ENCODE measurements at regions of chr6 and their contacts with region 1.

Region 1: GRCh38 chr6:31546962-31547726 is at the start of gene NFKBIL1:
- DNase-seq: peak; percentile 88 to 94
- H3K4me3 ChIP-seq: peak within 1 kb of the TSS; percentile 37 to 70 (median 51); a peak in 7 of 8 replicates
- H3K27ac ChIP-seq: peak within 1 kb of the TSS; percentile 21; the same call in 1 of the 2 replicates
- H3K4me1 ChIP-seq: peaks cover 0 to 8% (median 5%) of the 10 kb centered on the region in 4 experiments; a peak in 5 of 7 replicates
- H3K27me3 ChIP-seq: no peaks in the 10 kb centered on the region
- CTCF ChIP-seq: no peak
- EP300 ChIP-seq: peak in 1 of 2 experiments; percentile 61; a peak in 1 of 3 replicates
- POLR2A ChIP-seq: peak; percentile 22 to 74
- RAD21 ChIP-seq: peak in 1 of 2 experiments; percentile 7; a peak in 1 of 4 replicates
- total RNA-seq, gene NFKBIL1: 10.8 and 11.2 TPM in 2 replicates

Region 2: DNA sequence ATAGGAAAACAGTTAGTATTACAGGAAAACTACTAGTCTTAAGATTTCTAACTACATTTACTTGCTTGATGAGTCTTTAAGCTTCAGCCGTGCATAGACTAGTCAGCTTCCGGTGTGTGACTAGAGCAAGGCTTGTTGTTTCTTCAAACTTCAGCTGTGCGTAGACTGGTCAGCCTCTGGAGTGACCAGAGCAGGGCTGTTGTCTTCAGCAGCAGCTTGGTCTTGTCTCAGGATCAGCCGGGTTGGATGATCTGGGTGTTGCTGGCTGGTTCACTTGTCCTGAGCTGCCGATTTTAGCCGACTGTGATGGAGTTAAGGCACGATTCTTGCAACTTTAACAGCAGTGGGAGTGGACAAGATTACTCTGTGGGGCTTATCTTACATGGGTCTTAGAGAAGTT is 320.0 kb before region 1 on chr6:
- CTCF ChIA-PET with region 1: no interaction called
- POLR2A ChIA-PET with region 1: no interaction called
- DNase-seq: no peak
- H3K4me3 ChIP-seq: no peak overlapping the region
- H3K27ac ChIP-seq: no peak overlapping the region
- H3K4me1 ChIP-seq: no peaks in the 10 kb centered on the region
- H3K27me3 ChIP-seq: no peaks in the 10 kb centered on the region
- CTCF ChIP-seq: no peak
- EP300 ChIP-seq: no peak
- POLR2A ChIP-seq: no peak
- RAD21 ChIP-seq: no peak

Region 3: DNA sequence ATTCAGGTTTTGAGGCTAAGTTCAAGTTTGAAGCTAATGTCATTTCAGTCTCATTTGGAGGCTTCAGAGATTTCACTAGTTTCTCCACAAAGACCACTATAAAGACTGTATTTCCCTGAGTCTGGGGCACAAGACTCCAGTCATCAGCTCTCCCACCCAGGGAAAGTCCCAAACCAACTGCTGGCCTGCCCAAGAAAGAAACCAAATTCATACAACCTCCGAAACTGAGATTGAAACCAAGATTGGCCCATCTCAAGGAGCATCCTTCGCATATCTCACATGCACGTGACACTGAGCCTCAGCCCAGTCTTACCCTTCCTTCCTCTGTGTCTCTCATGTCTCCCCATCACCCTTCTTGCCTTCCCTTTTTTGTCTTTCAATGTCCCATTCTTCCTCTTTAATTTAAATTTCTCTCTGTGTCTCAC is 21.4 kb after region 1 on chr6:
- CTCF ChIA-PET with region 1: interaction called, 29 read pairs
- POLR2A ChIA-PET with region 1: interaction called, 9 read pairs
- DNase-seq: no peak
- H3K4me3 ChIP-seq: no peak overlapping the region
- H3K27ac ChIP-seq: no peak overlapping the region
- H3K4me1 ChIP-seq: no peaks in the 10 kb centered on the region; a peak in 2 of 7 replicates
- H3K27me3 ChIP-seq: no peaks in the 10 kb centered on the region
- CTCF ChIP-seq: no peak
- EP300 ChIP-seq: no peak
- POLR2A ChIP-seq: no peak
- RAD21 ChIP-seq: no peak

Region 4: DNA sequence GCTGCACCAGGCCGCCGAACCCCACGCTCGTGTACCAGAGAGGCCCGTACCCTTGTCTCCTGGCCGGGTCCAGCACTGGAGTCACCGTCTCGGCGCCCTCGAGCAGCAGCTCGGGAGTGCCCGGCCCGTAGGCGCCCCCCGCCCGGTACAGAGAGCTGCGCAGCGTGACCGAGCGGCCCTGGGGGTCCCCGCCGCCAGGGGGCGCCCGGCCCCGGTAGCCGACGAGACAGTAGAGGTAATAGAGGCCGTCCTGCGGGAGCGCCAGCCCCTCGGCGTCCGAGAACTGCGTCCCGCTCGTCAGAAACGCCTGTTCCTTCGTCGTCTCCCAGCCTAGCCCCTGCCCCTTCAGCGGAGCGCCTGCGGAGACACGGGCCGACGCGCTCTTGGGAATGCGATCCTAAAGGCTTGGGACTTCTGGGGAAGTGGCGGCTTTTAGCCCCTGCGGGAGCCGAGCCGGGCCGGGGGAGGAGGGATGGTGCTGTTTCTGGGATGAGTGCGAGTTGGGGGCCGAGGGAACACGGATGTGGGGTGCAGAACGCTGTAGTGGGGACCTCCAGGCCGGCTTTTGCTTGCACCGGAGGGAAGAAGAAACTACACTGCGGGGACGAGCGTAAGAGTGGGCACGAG is 33.8 kb after region 1 on chr6:
- CTCF ChIA-PET with region 1: interaction called, 254 read pairs
- POLR2A ChIA-PET with region 1: interaction called, 16 read pairs
- DNase-seq: peak; percentile 38 to 96
- H3K4me3 ChIP-seq: peak overlapping the region; percentile 54 to 89 (median 80)
- H3K27ac ChIP-seq: no peak overlapping the region
- H3K4me1 ChIP-seq: peaks cover 0 to 6% (median 6%) of the 10 kb centered on the region in 4 experiments; a peak in 6 of 7 replicates
- H3K27me3 ChIP-seq: peaks cover 0 to 8% (median 7%) of the 10 kb centered on the region in 4 experiments; a peak in 5 of 7 replicates
- CTCF ChIP-seq: peak in 2 of 3 experiments; percentile 89 to 93; a peak in 3 of 4 replicates
- EP300 ChIP-seq: no peak
- POLR2A ChIP-seq: 0 out of 3 replicates have a peak, but pooled peaks of 1 of the 2 experiments have one; percentile 18
- RAD21 ChIP-seq: peak; percentile 39 to 66

Region 5: GRCh38 chr6:31619805-31620585 is 72.9 kb after region 1 on chr6:
- CTCF ChIA-PET with region 1: interaction called, 13 read pairs
- POLR2A ChIA-PET with region 1: interaction called, 173 read pairs
- DNase-seq: peak; percentile 94 to 97
- H3K4me3 ChIP-seq: peak overlapping the region; percentile 72 to 97 (median 82)
- H3K27ac ChIP-seq: peak overlapping the region; percentile 99
- H3K4me1 ChIP-seq: peaks cover 2 to 12% (median 7%) of the 10 kb centered on the region in 4 experiments; a peak in 6 of 7 replicates
- H3K27me3 ChIP-seq: no peaks in the 10 kb centered on the region
- CTCF ChIP-seq: no peak
- EP300 ChIP-seq: no peak
- POLR2A ChIP-seq: peak; percentile 84 to 94
- RAD21 ChIP-seq: no peak

Region 6: DNA sequence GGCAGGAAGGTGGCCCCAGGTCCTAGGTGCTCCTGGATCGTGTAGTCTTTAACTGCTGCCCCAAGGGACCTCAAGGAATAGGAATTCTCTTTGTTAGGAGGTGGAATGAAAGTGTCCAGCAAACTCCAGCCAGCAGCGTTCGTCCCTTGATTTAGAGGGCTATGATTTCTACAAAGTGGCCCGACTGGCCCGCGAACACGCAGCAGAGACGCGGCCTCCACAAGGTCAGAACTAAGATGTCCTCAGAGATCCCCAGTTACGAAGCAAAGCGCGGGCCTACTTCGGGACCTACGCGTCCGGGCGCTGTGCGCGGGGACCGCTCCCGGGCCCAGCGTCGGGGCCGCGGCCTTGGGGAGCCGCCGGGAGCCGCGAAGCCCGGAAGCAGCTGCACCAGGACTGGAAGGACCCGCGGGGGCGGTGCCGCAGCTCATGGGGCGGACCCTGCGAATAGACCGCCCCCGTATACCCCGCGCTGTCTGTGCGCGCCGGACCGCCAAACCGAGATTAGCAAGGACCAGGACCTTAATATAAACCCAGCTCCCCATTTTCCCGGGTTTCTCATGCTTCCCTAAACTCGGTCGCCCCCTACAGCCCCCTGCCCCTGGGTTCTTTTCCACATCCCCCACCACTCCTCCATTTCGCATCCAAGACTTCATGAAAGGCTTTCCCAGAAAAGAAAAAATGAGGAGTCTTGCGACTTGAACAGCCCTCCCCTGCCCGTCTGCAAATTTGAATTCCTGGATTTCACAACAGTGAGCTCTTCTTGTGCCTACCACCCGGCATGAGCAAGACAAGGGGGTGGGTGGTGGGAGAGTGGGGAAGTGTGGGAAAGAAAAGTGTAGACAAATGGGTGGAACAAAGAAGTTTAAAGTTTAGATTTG is 113.5 kb after region 1 on chr6 and contains the start of gene C6orf47:
- CTCF ChIA-PET with region 1: interaction called, 6 read pairs
- POLR2A ChIA-PET with region 1: interaction called, 48 read pairs
- DNase-seq: peak; percentile 59 to 90
- H3K4me3 ChIP-seq: peak within 1 kb of the TSS; percentile 85 to 94 (median 88)
- H3K27ac ChIP-seq: peak within 1 kb of the TSS; percentile 63
- H3K4me1 ChIP-seq: peaks cover 0 to 15% (median 4%) of the 10 kb centered on the region in 4 experiments; a peak in 5 of 7 replicates
- H3K27me3 ChIP-seq: no peaks in the 10 kb centered on the region
- CTCF ChIP-seq: no peak
- EP300 ChIP-seq: no peak
- POLR2A ChIP-seq: peak in 1 of 2 experiments; percentile 83; a peak in 2 of 3 replicates
- RAD21 ChIP-seq: peak in 1 of 2 experiments; percentile 3; a peak in 1 of 4 replicates
- total RNA-seq, gene C6orf47: 14.6 and 15.6 TPM in 2 replicates